Activated naive CD4-positive, alpha-beta T cell treated with anti-CD3 and anti-CD28 coated beads, Interleukin-2, amount 10 ng/mL, durations not matched to agents 7 days and 5 days (primary cell): ENCODE measurements at regions of chrX and their contacts with region 1.

Region 1: DNA sequence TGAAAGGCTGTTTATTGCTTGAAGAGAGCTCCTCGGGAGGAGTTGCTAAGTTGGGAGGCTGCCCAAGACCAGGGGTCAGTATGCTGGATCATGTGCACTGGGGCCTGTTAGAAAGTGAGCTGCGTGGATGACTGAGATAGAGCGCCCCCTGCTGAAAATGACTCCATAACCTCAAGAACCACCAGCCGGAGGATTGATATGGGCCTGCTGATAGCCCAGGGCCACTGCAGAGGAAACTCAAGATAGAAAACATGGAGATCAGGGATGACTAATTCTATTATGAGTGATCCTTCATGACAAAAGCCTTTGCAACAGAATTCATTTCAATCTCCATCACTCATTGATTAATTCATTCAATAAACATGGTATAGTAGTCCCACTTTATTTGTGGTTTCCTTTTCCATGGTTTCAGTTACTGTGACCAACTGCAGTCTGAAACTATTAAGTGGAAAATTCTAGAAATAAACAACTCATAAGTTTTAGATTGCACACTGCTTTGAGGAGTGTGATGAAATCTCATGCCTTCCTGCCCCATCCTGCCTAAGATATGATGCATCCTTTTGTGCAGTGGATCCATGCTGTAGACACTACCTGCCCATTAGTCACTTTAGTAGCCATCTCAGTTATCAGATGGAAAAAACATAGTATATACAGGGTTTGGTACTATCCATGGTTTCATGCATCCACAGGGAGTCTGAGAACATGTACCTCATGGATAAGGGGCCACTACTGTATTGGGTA is 126.7 kb upstream of the MBNL3 start:
- DNase-seq: peak; percentile 53
- H3K4me3 Mint-ChIP-seq: no peak overlapping the region
- H3K27ac Mint-ChIP-seq: no peak overlapping the region
- H3K4me1 Mint-ChIP-seq: no peaks in the 10 kb centered on the region
- H3K27me3 Mint-ChIP-seq: no peaks in the 10 kb centered on the region

Region 2: DNA sequence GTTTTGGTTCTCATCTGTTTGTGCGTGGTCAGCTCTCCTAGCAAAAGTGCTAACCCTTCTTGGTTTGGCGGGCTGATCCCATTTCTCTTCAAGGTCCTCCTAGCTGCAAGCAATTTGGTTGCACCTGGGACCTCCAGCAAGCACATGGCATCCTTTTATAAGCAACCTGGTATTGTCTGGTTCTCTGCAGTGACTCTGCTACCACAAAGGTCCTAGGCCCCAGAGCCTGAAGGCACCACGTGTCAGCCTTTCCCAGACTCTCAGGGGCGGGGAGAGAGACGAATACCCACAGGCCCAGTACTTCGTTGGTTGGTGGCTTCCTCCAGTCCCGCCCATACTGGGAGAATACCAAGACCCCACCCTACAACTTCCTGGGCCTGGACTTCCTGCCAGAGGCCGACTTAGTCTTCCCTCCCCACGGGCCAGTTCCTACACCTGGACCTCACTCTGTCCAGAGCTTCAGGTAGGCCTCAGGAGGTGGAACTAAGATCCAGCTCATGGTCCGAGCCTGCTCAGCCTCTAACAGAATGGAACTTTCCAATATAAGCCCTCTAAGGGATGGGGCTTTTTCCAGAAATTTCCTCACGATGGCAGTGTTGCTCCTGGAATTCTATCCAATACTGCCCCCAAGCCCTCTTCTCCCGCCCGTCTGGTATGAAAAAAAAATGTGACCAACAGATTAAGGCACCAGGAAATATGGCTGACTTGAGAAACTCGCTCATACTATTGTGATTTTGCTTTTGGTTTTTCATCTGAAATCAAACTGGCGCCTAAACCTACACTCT is 785.0 kb before region 1 on chrX:
- CTCF ChIA-PET with region 1: interaction called, 26 read pairs
- DNase-seq: peak; percentile 79
- H3K4me3 Mint-ChIP-seq: peak overlapping the region; percentile 80
- H3K27ac Mint-ChIP-seq: peak overlapping the region; percentile 93
- H3K4me1 Mint-ChIP-seq: peaks cover 46% of the 10 kb centered on the region
- H3K27me3 Mint-ChIP-seq: no peaks in the 10 kb centered on the region

Region 3: GRCh38 chrX:132092439-132093065 is 523.0 kb before region 1 on chrX:
- CTCF ChIA-PET with region 1: interaction called, 12 read pairs
- DNase-seq: peak; percentile 64
- H3K4me3 Mint-ChIP-seq: no peak overlapping the region
- H3K27ac Mint-ChIP-seq: no peak overlapping the region
- H3K4me1 Mint-ChIP-seq: peaks cover 10% of the 10 kb centered on the region
- H3K27me3 Mint-ChIP-seq: peaks cover 4% of the 10 kb centered on the region

Region 4: GRCh38 chrX:132226169-132226568 is 389.4 kb before region 1 on chrX:
- CTCF ChIA-PET with region 1: interaction called, 13 read pairs
- DNase-seq: no peak
- H3K4me3 Mint-ChIP-seq: no peak overlapping the region
- H3K27ac Mint-ChIP-seq: no peak overlapping the region
- H3K4me1 Mint-ChIP-seq: peaks cover 4% of the 10 kb centered on the region
- H3K27me3 Mint-ChIP-seq: no peaks in the 10 kb centered on the region

Region 5: GRCh38 chrX:132292793-132293192 is 322.8 kb before region 1 on chrX:
- CTCF ChIA-PET with region 1: interaction called, 49 read pairs
- DNase-seq: peak; percentile 30
- H3K4me3 Mint-ChIP-seq: no peak overlapping the region
- H3K27ac Mint-ChIP-seq: no peak overlapping the region
- H3K4me1 Mint-ChIP-seq: no peaks in the 10 kb centered on the region
- H3K27me3 Mint-ChIP-seq: no peaks in the 10 kb centered on the region

Region 6: DNA sequence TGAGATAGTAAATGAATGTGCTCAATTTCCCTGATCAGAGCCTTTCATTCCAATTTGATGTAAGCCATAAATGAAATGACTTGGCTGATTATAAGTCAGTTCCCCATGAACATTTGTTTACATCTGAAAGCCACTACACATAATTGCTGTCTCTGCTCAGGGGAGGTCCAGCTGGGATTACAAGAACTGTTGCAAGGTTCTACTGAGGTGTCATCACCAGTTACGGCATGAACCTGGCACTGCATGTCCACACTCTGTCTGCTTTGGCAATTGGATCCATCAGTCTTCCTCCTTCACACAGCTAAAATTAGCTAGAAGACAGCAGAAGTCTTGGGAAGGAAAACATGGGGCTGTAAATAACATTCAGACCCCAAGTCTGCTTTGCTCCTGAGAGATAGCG is 114.0 kb before region 1 on chrX:
- CTCF ChIA-PET with region 1: no interaction called
- DNase-seq: no peak
- H3K4me3 Mint-ChIP-seq: no peak overlapping the region
- H3K27ac Mint-ChIP-seq: no peak overlapping the region
- H3K4me1 Mint-ChIP-seq: no peaks in the 10 kb centered on the region
- H3K27me3 Mint-ChIP-seq: peaks cover 7% of the 10 kb centered on the region

Region 7: GRCh38 chrX:132704769-132705168 is 89.2 kb after region 1 on chrX:
- CTCF ChIA-PET with region 1: no interaction called
- DNase-seq: no peak
- H3K4me3 Mint-ChIP-seq: no peak overlapping the region
- H3K27ac Mint-ChIP-seq: no peak overlapping the region
- H3K4me1 Mint-ChIP-seq: no peaks in the 10 kb centered on the region
- H3K27me3 Mint-ChIP-seq: peaks cover 5% of the 10 kb centered on the region